Kidney (tissue), 22 donors: ENCODE measurements at regions of chr14 and their contacts with region 1.

Region 1: DNA sequence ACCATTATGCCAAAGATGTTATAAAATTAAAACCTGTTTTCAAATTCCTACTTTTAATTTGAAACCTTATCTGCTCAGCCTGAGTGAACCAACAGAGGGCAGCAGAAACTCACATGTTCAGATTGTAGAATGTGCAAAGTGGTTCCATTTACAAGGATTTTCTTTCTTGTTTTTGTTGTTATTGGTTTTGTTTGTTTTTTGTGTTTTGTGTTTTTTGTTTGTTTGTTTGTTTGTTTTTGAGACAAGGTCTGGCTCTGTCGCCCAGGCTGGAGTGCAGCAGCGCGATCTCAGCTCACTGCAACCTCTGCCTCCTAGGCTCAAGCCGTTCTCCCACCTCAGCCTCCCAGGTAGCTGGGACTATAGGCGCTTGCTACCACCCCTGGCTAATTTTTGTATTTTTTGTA is 22.8 kb upstream of the GARIN2 start:
- DNase-seq: peak in 3 of 5 donors; percentile 41 to 67 (median 56)
- H3K4me3 ChIP-seq: no peak overlapping the region
- H3K27ac ChIP-seq: no peak overlapping the region
- H3K4me1 ChIP-seq: no peaks in the 10 kb centered on the region
- H3K27me3 ChIP-seq: no peaks in the 10 kb centered on the region
- CTCF ChIP-seq: peak; percentile 84

Region 2: GRCh38 chr14:67276131-67276530 is 109.7 kb after region 1 on chr14:
- intact Hi-C with region 1: loop called (anchors 5 kb)
- DNase-seq: no peak
- H3K4me3 ChIP-seq: no peak overlapping the region
- H3K27ac ChIP-seq: no peak overlapping the region
- H3K4me1 ChIP-seq: peaks cover 0 to 15% (median 6%) of the 10 kb centered on the region in 3 donors
- H3K27me3 ChIP-seq: no peaks in the 10 kb centered on the region
- CTCF ChIP-seq: no peak

Region 3: GRCh38 chr14:67285876-67286452 is 119.5 kb after region 1 on chr14:
- intact Hi-C with region 1: loop called (anchors 5 kb)
- DNase-seq: peak in 2 of 5 donors; percentile 58 to 64
- H3K4me3 ChIP-seq: no peak overlapping the region
- H3K27ac ChIP-seq: no peak overlapping the region
- H3K4me1 ChIP-seq: no peaks in the 10 kb centered on the region
- H3K27me3 ChIP-seq: no peaks in the 10 kb centered on the region
- CTCF ChIP-seq: peak; percentile 52

Region 4: GRCh38 chr14:67532998-67533753 is 366.7 kb after region 1 on chr14 and contains the start of gene PLEKHH1:
- intact Hi-C with region 1: no loop called
- DNase-seq: peak; percentile 84 to 93 (median 89)
- H3K4me3 ChIP-seq: peak within 1 kb of the TSS; percentile 57 to 67 (median 66)
- H3K27ac ChIP-seq: peak within 1 kb of the TSS; percentile 53 to 54
- H3K4me1 ChIP-seq: peaks cover 0 to 2% (median 0%) of the 10 kb centered on the region in 3 donors
- H3K27me3 ChIP-seq: no peaks in the 10 kb centered on the region
- CTCF ChIP-seq: no peak
- total RNA-seq, gene PLEKHH1: 26.2 TPM